ENCODE measurements at regions of chr4 and their contacts with region 1.

Region 1: GRCh38 chr4:3212786-3213425 is 36.1 kb upstream of the MSANTD1 start:
- DNase-seq: no peak
- H3K4me3 Mint-ChIP-seq: no peak overlapping the region
- H3K27ac Mint-ChIP-seq: no peak overlapping the region
- H3K4me1 Mint-ChIP-seq: no peaks in the 10 kb centered on the region
- H3K27me3 Mint-ChIP-seq: no peaks in the 10 kb centered on the region

Region 2: DNA sequence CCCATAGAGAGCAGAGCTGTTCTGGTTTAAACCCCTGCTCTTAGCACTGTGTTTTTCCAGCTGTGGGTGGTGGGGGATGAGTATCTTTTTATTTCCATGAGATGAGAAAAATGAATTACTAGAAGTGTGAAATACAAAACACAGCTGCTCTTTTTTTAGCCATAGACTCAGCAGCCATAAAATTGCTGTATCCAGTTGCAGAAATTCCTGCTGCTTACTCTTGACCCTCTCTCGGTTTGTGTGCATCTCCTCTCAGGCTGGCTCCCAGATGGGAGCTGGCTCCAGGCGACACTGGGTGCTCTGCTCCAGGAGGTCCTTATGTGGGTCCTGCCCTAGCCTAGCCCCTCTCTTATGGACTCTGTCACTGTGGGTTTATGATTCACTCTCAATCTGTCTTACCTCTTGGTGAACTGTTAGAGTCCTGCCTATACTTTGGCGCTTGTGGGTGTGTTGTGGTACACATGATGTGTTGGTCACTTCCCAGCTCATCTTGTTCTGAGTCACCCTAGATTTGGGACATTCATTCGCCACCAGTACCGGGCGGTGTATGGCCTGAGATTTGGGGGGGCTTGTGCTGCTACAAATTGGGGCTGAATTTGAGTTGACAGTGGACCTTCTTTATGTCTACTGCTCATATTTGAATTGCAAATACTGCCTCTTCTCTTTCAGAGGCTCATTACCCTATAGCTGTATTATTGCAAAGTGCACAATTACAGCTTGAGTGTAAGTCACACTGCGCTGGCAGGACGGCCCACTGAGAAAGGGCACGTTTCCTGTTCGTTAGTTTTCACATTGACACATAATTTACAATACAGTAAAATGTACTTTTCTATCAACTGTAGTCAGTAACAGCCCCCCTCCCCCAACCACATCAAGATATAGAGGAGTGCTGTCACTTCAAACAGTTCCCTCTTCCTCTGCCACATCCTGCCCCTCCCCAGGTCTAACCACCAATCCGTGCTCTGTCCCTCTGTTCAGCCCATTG is 10.9 kb before region 1 on chr4:
- CTCF ChIA-PET with region 1: interaction called, 3 read pairs
- POLR2A ChIA-PET with region 1: interaction called, 14 read pairs
- DNase-seq: peak; percentile 88
- H3K4me3 Mint-ChIP-seq: peak overlapping the region; percentile 67
- H3K27ac Mint-ChIP-seq: peak overlapping the region; percentile 97
- H3K4me1 Mint-ChIP-seq: peaks cover 49% of the 10 kb centered on the region
- H3K27me3 Mint-ChIP-seq: no peaks in the 10 kb centered on the region

Region 3: GRCh38 chr4:3241898-3242524 is 29.1 kb after region 1 on chr4:
- CTCF ChIA-PET with region 1: no interaction called
- POLR2A ChIA-PET with region 1: no interaction called
- DNase-seq: no peak
- H3K4me3 Mint-ChIP-seq: no peak overlapping the region
- H3K27ac Mint-ChIP-seq: no peak overlapping the region
- H3K4me1 Mint-ChIP-seq: peaks cover 18% of the 10 kb centered on the region
- H3K27me3 Mint-ChIP-seq: no peaks in the 10 kb centered on the region

Region 4: DNA sequence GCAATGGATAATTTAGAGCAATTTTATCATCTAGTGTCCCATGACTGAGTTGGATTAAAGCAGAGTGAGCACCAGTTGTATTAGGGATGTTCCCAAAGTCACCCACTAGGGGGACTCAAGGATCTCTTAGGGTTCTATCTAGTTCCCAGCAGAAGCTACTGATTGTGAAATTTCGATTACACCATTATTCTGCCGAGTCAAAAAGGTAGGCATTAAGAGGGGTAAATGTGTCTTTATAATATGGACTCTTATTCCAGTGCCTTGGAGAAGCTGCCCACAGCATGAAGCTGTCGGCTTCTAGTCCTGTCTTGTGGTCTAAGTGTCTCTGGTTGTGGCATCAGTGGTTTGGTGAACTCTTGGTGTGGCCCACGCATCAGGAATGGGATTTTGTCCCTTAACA is 133.2 kb after region 1 on chr4:
- CTCF ChIA-PET with region 1: no interaction called
- POLR2A ChIA-PET with region 1: no interaction called
- DNase-seq: no peak
- H3K4me3 Mint-ChIP-seq: no peak overlapping the region
- H3K27ac Mint-ChIP-seq: no peak overlapping the region
- H3K4me1 Mint-ChIP-seq: peaks cover 6% of the 10 kb centered on the region
- H3K27me3 Mint-ChIP-seq: no peaks in the 10 kb centered on the region